SK-N-SH (cell line): ENCODE measurements at regions of chr11 and their contacts with region 1.

Region 1: DNA sequence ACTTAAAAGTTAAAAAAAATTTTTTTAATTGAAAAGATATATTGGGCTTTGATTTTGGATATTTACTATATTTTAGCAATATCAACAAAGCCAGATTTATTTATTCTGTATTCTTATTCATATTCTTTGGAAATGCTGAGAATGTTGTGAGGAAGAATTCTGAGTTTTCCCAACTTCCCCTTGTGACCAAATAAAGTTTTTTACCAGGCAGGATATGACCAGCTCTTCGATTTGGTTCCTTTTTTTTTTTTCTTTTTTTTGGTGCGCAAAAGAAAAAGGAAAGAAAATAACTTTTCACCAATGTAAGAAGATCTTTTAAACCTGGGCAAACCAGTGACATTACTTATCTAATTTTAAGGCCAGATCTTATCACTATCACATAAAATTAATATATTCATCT is 12.9 kb downstream of the TCP11L1 start:
- DNase-seq: no peak
- H3K4me3 ChIP-seq: no peak overlapping the region
- H3K27ac ChIP-seq: no peak overlapping the region
- H3K4me1 ChIP-seq: peaks cover 14 to 31% of the 10 kb centered on the region in 2 experiments; a peak in 3 of 4 replicates
- H3K27me3 ChIP-seq: no peaks in the 10 kb centered on the region
- CTCF ChIP-seq: no peak
- EP300 ChIP-seq: no peak
- RAD21 ChIP-seq: no peak

Region 2: GRCh38 chr11:32987851-32988250 is 64.4 kb before region 1 on chr11:
- CTCF ChIA-PET with region 1: no interaction called
- POLR2A ChIA-PET with region 1: no interaction called
- DNase-seq: no peak
- H3K4me3 ChIP-seq: no peak overlapping the region
- H3K27ac ChIP-seq: no peak overlapping the region
- H3K4me1 ChIP-seq: no peaks in the 10 kb centered on the region
- H3K27me3 ChIP-seq: no peaks in the 10 kb centered on the region
- CTCF ChIP-seq: no peak
- EP300 ChIP-seq: no peak
- RAD21 ChIP-seq: no peak

Region 3: DNA sequence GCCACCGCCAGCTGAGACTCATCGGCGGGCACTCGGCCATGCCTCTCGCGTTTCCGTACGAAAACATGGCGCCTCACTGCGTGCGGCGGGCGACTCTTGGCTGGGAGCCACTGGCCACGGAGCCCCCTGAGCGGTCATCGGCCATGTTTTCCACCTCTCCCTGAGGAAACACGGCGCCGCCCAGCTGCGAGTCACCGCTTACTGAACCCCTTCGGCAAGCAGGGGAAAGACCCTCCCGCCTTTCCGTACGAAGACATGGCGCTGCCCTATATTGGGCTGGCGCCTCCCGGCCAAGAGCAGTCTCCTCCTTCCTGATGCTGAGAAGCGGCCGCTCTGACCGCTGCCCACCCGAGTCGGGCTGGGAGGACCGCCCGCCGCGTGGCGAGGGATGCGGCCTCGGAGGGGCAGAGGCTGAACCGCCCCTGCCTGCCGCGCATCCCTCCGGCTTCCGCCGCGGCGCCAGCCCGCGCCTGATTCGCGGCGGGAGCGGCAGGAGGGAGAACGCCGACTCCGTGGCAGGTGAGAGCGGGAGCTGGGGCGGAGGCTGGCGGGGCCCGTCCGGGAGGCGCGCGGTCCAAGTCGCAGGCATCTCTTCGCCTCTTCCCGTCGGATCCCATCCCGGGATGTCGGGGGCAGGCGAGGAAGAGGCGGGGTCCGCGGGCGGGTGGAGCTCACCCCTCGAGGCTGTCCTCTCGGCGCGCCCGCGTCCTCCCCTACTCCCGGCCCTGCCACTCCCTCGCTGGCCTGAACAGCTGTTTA is 12.8 kb before region 1 on chr11 and contains the start of gene TCP11L1:
- CTCF ChIA-PET with region 1: interaction called, 8 read pairs
- POLR2A ChIA-PET with region 1: interaction called, 11 read pairs
- DNase-seq: peak; percentile 93
- H3K4me3 ChIP-seq: peak within 1 kb of the TSS; percentile 71 to 77
- H3K27ac ChIP-seq: peak within 1 kb of the TSS; percentile 94 to 96
- H3K4me1 ChIP-seq: peaks cover 8 to 35% of the 10 kb centered on the region in 2 experiments; a peak in 3 of 4 replicates
- H3K27me3 ChIP-seq: no peaks in the 10 kb centered on the region
- CTCF ChIP-seq: no peak
- EP300 ChIP-seq: 0 out of 4 replicates have a peak, but pooled peaks of 1 of the 2 experiments have one; percentile 15
- RAD21 ChIP-seq: no peak
- polyA plus RNA-seq, gene TCP11L1: 12.7 and 15.1 TPM in 2 replicates